Astrocyte of the cerebellum (primary cell): ENCODE measurements at regions of chr22 and their contacts with region 1.

Region 1: DNA sequence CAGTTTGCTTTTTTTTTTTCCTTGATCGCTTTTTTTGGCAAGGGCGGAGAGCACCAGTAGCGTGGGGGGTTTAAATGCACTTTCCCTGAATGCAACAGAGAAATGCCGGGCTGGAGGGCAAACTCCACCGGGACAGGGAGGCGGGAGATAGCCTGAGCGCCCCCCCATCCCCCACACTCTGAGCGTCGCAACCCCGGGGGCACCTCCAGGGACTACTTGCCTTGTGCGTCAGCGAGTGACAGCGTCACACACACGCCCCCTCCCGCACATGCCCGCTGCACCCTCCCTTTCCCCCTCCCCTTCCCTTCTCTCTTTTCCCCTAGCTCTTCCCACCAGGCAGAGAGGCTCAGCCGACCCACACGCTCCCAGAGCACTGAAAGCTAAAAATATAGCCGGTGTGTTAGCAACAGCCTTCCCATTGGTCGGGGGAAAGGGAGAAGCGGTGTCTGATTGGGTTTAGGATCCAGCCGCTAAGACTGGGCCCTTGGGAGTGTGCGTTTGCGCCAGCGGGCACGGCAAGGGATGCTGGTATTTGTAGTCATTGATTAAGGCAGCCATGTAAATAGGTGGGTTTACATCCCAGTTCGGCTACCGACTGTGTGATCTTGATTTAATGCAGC is 1.7 kb upstream of the TOB2 start:
- DNase-seq: peak; percentile 99
- H3K4me3 ChIP-seq: peak overlapping the region; percentile 100
- CTCF ChIP-seq: no peak

Region 2: GRCh38 chr22:41401781-41402648 is 46.3 kb before region 1 on chr22:
- in situ Hi-C with region 1: no loop called
- DNase-seq: no peak
- H3K4me3 ChIP-seq: no peak overlapping the region
- CTCF ChIP-seq: no peak

Region 3: GRCh38 chr22:41487037-41487935 is 39.0 kb after region 1 on chr22:
- in situ Hi-C with region 1: loop called (anchors 5 kb)
- DNase-seq: no peak
- H3K4me3 ChIP-seq: no peak overlapping the region
- CTCF ChIP-seq: no peak